ENCODE measurements at regions of chr22 and their contacts with region 1.

Region 1: GRCh38 chr22:29202212-29203192 is 3.2 kb upstream of the EMID1 start:
- DNase-seq: peak; percentile 55
- H3K4me3 ChIP-seq: no peak overlapping the region
- H3K4me3 Mint-ChIP-seq: no peak overlapping the region
- H3K27ac Mint-ChIP-seq: no peak overlapping the region
- H3K4me1 ChIP-seq: peaks cover 4% of the 10 kb centered on the region; the same call in 1 of the 2 replicates
- H3K4me1 Mint-ChIP-seq: no peaks in the 10 kb centered on the region
- H3K27me3 ChIP-seq: no peaks in the 10 kb centered on the region
- H3K27me3 Mint-ChIP-seq: no peaks in the 10 kb centered on the region
- CTCF ChIP-seq: peak; percentile 41 to 69

Region 2: GRCh38 chr22:29219881-29220670 is 17.6 kb after region 1 on chr22:
- CTCF ChIA-PET with region 1: interaction called, 15 read pairs
- POLR2A ChIA-PET with region 1: interaction called, 7 read pairs
- intact Hi-C with region 1: loop called (anchors 2 kb)
- DNase-seq: peak; percentile 60 to 61
- H3K4me3 ChIP-seq: no peak overlapping the region
- H3K4me3 Mint-ChIP-seq: peak overlapping the region; percentile 49
- H3K27ac Mint-ChIP-seq: peak overlapping the region; percentile 87
- H3K4me1 ChIP-seq: peaks cover 17% of the 10 kb centered on the region
- H3K4me1 Mint-ChIP-seq: peaks cover 13% of the 10 kb centered on the region
- H3K27me3 ChIP-seq: no peaks in the 10 kb centered on the region
- H3K27me3 Mint-ChIP-seq: no peaks in the 10 kb centered on the region
- CTCF ChIP-seq: peak in 1 of 2 experiments; percentile 9

Region 3: GRCh38 chr22:29375398-29376076 is 173.0 kb after region 1 on chr22:
- CTCF ChIA-PET with region 1: no interaction called
- POLR2A ChIA-PET with region 1: no interaction called
- intact Hi-C with region 1: loop called (anchors 10 kb)
- DNase-seq: no peak
- H3K4me3 ChIP-seq: no peak overlapping the region
- H3K4me3 Mint-ChIP-seq: no peak overlapping the region
- H3K27ac Mint-ChIP-seq: peak overlapping the region; percentile 67
- H3K4me1 ChIP-seq: peaks cover 43% of the 10 kb centered on the region
- H3K4me1 Mint-ChIP-seq: peaks cover 49% of the 10 kb centered on the region
- H3K27me3 ChIP-seq: no peaks in the 10 kb centered on the region
- H3K27me3 Mint-ChIP-seq: no peaks in the 10 kb centered on the region
- CTCF ChIP-seq: no peak

Measured in Caco-2 (cell line).